ENCODE measurements at regions of chr20 and their contacts with region 1.

Region 1: DNA sequence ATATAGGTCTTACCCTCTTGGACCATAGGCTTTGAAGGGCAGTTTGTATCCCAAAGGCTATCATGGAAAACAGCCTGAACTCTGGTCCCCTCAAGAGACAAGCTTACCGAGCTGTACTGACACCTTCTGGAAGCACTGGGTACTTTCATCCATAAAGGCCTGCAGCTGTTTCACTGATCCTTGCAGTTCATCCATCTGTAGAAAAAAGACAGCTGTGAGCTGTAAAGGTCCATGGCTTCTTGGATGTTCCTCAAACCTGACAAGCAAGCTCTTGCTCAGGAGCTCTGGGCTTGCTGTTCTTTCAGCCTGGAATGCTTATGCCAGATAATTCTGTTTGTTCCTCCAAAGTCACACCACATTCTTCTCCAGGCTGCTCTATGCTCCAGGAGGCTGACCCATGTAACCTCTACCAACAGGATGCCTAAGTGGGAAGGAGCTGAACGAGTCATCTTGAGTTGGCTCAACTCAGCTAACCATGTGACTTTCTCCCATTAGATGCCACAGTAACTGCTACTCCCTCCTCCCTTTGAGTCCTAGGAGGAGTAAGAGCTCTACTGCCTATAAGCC is 8.8 kb upstream of the NDRG3 start:
- DNase-seq: peak; percentile 50
- CTCF ChIP-seq: peak; percentile 62

Region 2: DNA sequence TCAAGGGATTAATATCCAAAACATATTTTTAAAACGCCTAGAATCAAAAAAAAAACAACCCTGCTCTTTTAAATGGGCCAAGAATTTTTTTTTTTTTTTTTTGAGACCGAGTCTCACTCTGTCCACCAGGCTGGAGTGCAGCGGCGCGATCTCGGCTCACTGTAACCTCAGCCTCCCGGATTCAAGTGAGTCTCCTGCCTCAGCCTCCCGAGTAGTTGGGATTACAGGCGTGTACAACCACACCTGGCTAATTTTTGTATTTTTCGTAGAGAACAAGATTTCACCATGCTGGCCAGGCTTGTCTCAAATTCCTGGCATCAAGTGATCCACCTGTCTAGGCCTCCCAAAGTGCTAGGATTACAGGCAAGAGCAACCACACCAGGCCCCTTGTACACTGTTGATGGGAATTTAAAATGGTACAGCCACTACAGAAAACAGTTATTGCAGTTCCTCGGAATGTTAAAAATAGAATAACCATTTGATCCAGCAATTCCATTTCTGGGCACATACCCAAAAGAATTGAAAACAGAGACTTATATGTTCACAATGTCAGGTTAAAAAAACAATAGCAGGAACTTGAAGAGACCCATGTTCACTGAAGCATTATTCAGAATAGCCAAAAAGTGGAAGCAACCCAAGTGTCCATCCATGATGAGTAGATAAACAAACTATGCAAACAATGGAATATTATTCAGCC is 216.6 kb before region 1 on chr20:
- CTCF ChIA-PET with region 1: no interaction called
- POLR2A ChIA-PET with region 1: no interaction called
- DNase-seq: no peak
- CTCF ChIP-seq: no peak

Region 3: GRCh38 chr20:36736451-36737182 is 18.1 kb before region 1 on chr20:
- CTCF ChIA-PET with region 1: interaction called, 21 read pairs
- POLR2A ChIA-PET with region 1: no interaction called
- DNase-seq: no peak
- CTCF ChIP-seq: no peak

Measured in GM10248 (cell line).